Activated naive CD4-positive, alpha-beta T cell treated with anti-CD3 and anti-CD28 coated beads for 36 hours (primary cell): ENCODE measurements at regions of chr2 and their contacts with region 1.

Region 1: DNA sequence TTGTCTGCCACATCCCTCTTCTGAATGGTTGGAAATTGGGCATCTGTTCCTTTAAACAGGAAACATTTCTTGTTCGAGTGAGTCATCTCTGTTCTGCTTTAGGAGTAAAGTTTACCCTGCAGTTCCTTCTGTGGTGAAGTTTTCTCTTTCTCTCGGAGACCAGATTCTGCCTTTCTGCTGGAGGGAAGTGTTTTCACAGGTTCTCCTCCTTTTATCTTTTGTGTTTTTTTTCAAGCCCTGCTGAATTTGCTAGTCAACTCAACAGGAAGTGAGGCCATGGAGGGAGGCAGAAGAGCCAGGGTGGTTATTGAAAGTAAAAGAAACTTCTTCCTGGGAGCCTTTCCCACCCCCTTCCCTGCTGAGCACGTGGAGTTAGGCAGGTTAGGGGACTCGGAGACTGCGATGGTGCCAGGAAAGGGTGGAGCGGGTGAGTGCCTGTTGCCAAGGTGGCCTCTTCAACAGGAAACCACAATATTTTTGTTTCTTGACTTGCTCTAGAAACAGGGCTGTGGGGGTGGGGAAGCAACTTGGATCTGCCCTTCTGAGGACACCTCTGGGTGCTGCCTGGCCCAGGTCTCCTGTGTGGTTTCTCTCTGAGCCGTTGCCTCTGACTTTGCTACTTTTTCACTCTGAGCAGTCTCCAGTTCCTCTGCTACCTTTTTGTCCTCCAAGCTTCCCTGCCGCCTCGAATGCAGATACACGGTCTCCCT is 2.2 kb upstream of the CASP8 start:
- DNase-seq: peak; percentile 98
- H3K4me3 Mint-ChIP-seq: peak overlapping the region; percentile 78
- H3K27ac Mint-ChIP-seq: peak overlapping the region; percentile 97
- H3K4me1 Mint-ChIP-seq: peaks cover 71% of the 10 kb centered on the region
- H3K27me3 Mint-ChIP-seq: no peaks in the 10 kb centered on the region

Region 2: GRCh38 chr2:200713003-200713703 is 545.0 kb before region 1 on chr2:
- CTCF ChIA-PET with region 1: no interaction called
- intact Hi-C with region 1: loop called (anchors 1 kb)
- DNase-seq: peak; percentile 96
- H3K4me3 Mint-ChIP-seq: peak overlapping the region; percentile 77
- H3K27ac Mint-ChIP-seq: peak overlapping the region; percentile 100
- H3K4me1 Mint-ChIP-seq: peaks cover 32% of the 10 kb centered on the region
- H3K27me3 Mint-ChIP-seq: no peaks in the 10 kb centered on the region

Region 3: GRCh38 chr2:201118121-201118960 is 139.8 kb before region 1 on chr2:
- CTCF ChIA-PET with region 1: no interaction called
- intact Hi-C with region 1: loop called (anchors 1 kb)
- DNase-seq: peak; percentile 94
- H3K4me3 Mint-ChIP-seq: peak overlapping the region; percentile 96
- H3K27ac Mint-ChIP-seq: peak overlapping the region; percentile 100
- H3K4me1 Mint-ChIP-seq: peaks cover 41% of the 10 kb centered on the region
- H3K27me3 Mint-ChIP-seq: no peaks in the 10 kb centered on the region

Region 4: GRCh38 chr2:201273330-201273983 is 15.3 kb after region 1 on chr2:
- CTCF ChIA-PET with region 1: interaction called, 6 read pairs
- intact Hi-C with region 1: loop called (anchors 1 kb)
- DNase-seq: no peak
- H3K4me3 Mint-ChIP-seq: peak overlapping the region; percentile 23
- H3K27ac Mint-ChIP-seq: peak overlapping the region; percentile 35
- H3K4me1 Mint-ChIP-seq: peaks cover 41% of the 10 kb centered on the region
- H3K27me3 Mint-ChIP-seq: no peaks in the 10 kb centered on the region

Region 5: GRCh38 chr2:201432038-201432620 is 174.0 kb after region 1 on chr2:
- CTCF ChIA-PET with region 1: no interaction called
- intact Hi-C with region 1: loop called (anchors 5 kb)
- DNase-seq: no peak
- H3K4me3 Mint-ChIP-seq: peak overlapping the region; percentile 56
- H3K27ac Mint-ChIP-seq: peak overlapping the region; percentile 96
- H3K4me1 Mint-ChIP-seq: peaks cover 45% of the 10 kb centered on the region
- H3K27me3 Mint-ChIP-seq: no peaks in the 10 kb centered on the region

Region 6: DNA sequence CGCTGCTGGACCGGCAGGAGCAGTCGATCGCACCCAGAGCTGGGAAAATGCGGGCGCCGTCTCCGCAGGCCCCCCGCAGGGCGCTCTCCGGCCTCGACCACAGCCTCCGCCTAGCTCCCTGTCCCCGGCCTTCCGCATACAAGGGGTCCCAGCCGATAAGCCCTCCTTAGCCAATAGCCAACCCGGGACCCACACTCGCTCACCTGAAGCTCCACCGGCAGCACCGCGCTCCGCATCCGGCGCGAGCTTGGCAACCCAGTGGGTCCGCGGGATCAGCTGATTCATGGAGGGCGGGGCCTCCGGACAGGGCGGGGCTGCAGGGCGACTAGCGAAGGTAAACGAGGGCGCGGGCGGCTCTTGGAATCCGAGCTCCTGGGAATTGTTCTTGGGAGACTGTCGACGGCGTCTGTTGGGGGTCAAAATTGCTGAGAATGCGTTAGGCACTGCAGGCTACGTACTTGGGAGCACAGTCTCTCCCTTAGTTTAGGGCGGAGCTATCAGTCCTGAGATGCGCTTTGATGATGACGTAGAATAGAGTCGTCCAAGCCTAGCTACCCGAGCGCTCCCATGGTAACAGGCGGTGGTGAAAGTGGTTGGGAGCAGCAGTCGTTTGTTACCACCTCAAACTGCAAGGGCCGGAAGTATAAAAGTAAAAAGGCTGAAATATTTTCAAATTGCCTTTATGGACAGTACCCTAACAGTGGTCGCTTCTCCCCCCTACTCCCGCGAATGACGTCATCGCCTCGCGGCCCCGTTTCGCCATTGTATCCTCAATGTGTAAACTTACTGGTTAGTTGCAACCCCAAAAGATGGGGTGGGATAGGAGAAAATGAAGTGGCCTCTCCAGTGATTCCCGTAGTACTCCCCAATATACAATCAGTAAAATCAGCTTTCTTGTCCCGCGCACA is 522.8 kb after region 1 on chr2 and contains the start of gene ALS2:
- CTCF ChIA-PET with region 1: no interaction called
- intact Hi-C with region 1: loop called (anchors 1 kb)
- DNase-seq: peak; percentile 96
- H3K4me3 Mint-ChIP-seq: peak within 1 kb of the TSS; percentile 86
- H3K27ac Mint-ChIP-seq: peak within 1 kb of the TSS; percentile 83
- H3K4me1 Mint-ChIP-seq: peaks cover 13% of the 10 kb centered on the region
- H3K27me3 Mint-ChIP-seq: peaks cover 3% of the 10 kb centered on the region
- total RNA-seq, gene ALS2: 9.4 to 11.2 TPM